Caco-2 (cell line): ENCODE measurements at regions of chr3 and their contacts with region 1.

Region 1: DNA sequence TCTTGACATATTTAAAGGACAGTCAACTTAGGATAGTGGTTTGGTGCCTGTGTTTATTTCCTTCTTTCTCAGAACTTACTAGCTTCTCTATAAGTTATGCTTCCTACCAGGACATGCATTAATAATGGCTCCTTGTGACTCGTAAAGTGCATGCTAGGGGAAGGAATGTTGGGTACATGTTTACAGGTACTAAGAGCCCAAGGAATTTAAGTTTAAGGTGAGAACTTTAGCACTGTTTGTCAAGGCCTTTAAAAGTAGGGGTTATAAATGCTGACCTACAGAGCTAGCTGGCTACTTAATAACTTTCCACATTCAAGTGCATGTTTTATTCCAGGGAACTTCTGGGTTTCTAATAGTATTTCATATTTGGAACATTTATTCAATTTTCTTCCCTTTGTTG is at the start of gene TMEM207:
- DNase-seq: no peak
- H3K4me3 ChIP-seq: no peak within 1 kb of the TSS
- H3K4me3 Mint-ChIP-seq: no peak within 1 kb of the TSS
- H3K27ac Mint-ChIP-seq: no peak within 1 kb of the TSS
- H3K4me1 ChIP-seq: peaks cover 40% of the 10 kb centered on the region
- H3K4me1 Mint-ChIP-seq: peaks cover 15% of the 10 kb centered on the region
- H3K27me3 ChIP-seq: no peaks in the 10 kb centered on the region
- H3K27me3 Mint-ChIP-seq: no peaks in the 10 kb centered on the region
- CTCF ChIP-seq: no peak
- total RNA-seq, gene TMEM207: 0.65 TPM in 1 of 2 replicates, not detected in the other

Region 2: GRCh38 chr3:190513409-190514162 is 63.8 kb after region 1 on chr3 and contains the start of gene IL1RAP:
- CTCF ChIA-PET with region 1: no interaction called
- POLR2A ChIA-PET with region 1: no interaction called
- intact Hi-C with region 1: loop called (anchors 1 kb)
- DNase-seq: peak; percentile 86 to 91
- H3K4me3 ChIP-seq: peak within 1 kb of the TSS; percentile 63
- H3K4me3 Mint-ChIP-seq: peak within 1 kb of the TSS; percentile 94
- H3K27ac Mint-ChIP-seq: peak within 1 kb of the TSS; percentile 69
- H3K4me1 ChIP-seq: no peaks in the 10 kb centered on the region
- H3K4me1 Mint-ChIP-seq: peaks cover 10% of the 10 kb centered on the region
- H3K27me3 ChIP-seq: no peaks in the 10 kb centered on the region
- H3K27me3 Mint-ChIP-seq: peaks cover 9% of the 10 kb centered on the region
- CTCF ChIP-seq: peak; percentile 36 to 63
- total RNA-seq, gene IL1RAP: 5.1 and 6.2 TPM in 2 replicates